ENCODE measurements at regions of chr10 and their contacts with region 1.

Region 1: GRCh38 chr10:103921750-103922195 is 3.8 kb upstream of the STN1 start:
- DNase-seq: no peak
- ATAC-seq: no peak

Region 2: GRCh38 chr10:103960103-103960502 is 38.3 kb after region 1 on chr10:
- intact Hi-C with region 1: loop called in 1 of 2 experiments (anchors 5 kb)
- DNase-seq: no peak
- ATAC-seq: peak in 1 of 2 donors; percentile 87